ENCODE measurements at regions of chr5 and their contacts with region 1.

Region 1: DNA sequence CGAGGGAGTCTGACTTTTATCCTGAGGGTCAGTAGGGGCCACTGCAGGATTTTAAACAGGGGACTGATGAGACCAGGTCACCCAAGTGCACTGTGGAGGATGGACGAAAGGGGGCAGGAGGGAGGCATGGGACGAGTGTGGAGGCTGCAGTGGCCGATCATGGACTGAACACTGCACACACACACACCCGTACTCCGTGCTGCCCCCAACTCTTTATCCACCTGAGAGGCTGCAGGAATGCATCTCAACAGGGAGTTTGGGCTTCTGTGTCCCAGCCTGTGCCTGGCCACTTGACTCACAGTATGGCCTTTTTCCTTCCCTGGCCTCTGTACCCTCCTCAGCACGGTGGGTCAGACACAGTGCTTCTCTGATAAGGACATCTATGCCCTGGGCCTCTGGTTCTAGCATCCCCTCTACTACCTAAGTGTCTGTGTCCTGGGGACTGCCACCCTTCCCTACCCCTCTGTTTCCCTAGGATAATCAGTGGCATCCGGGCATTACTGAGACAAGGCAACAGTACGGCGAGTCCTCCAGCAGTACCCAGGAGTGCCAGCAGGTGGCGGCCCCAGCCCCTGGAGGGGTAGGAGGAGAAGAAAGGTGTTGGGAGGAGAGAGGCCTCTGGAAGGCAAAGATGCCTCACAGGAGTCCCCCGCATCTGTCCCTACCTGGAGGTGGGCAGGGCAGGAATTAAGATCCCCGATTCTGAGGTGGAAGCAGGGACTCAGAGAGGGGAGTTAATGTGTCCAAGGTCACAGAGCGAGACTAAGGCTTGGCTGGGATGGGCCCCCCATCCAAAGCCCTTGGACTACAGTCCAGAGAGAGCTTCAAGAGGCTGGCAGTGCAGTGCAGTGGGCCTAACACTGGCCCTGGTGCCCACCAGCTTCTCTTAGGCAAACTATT is 5.1 kb upstream of the CDX1 start:
- DNase-seq: peak; percentile 97
- ATAC-seq: peak; percentile 85
- H3K4me3 Mint-ChIP-seq: peak overlapping the region; percentile 43
- H3K27ac Mint-ChIP-seq: no peak overlapping the region
- H3K4me1 Mint-ChIP-seq: peaks cover 26% of the 10 kb centered on the region
- H3K27me3 Mint-ChIP-seq: peaks cover 56% of the 10 kb centered on the region
- CTCF ChIP-seq: peak; percentile 95

Region 2: DNA sequence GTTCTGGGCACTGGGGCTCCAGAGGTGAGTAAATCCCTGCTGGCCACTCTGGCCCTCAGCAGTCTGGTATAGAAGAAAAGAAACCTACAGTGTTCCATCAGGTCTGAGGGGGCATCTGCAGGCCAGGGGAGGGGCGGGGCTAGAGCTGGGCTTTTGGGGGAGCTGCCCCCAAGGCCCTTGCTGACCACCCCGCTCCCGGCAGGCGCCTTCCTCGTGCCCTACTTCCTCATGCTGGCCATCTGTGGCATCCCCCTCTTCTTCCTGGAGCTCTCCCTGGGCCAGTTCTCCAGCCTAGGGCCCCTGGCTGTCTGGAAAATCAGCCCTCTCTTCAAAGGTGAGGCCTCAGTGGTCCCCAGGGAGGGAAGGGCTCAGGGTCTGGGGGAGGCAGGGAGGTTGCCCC is 35.0 kb after region 1 on chr5:
- CTCF ChIA-PET with region 1: no interaction called
- POLR2A ChIA-PET with region 1: no interaction called
- DNase-seq: no peak
- ATAC-seq: no peak
- H3K4me3 Mint-ChIP-seq: no peak overlapping the region
- H3K27ac Mint-ChIP-seq: no peak overlapping the region
- H3K4me1 Mint-ChIP-seq: no peaks in the 10 kb centered on the region
- H3K27me3 Mint-ChIP-seq: peaks cover 17% of the 10 kb centered on the region
- CTCF ChIP-seq: no peak

Region 3: DNA sequence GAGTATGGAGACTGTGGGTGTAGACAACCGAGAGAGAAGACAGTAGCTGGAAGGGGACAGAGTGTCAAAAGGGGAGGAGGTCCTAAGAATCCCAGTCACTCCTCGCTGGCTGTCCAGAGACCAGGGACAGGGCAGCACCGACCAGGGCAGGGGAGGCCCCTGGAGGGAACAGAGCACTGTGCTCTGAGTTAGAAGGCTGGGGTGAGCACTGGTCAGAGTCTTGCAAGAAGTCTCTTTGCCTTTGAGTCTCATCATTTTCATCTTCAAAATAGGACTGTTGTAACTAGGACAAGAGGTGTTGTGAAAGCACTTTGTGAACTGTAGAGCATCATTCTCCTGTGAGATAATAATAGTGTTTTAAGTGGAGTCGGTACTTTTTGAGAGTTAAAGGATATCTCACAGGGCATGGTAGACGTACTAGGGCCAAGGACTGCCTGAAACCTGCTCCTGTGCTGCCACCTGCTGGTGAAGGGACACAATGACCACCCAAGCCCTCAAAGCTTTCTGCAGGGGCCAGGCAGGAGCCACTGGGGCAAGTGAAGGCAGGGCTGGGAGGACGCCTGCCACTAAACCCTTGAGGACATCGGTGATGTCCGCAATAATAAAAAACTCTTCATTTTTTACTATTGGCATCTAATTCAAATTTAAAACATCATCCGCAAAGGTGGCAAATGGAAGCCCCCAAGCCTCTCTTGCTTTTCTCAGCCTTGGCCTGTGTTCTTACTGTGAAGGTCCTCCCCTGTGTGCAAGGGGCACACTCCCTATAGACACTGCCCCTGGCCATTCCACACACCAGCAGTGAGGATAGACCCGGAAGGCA is 56.6 kb after region 1 on chr5:
- CTCF ChIA-PET with region 1: interaction called, 20 read pairs
- POLR2A ChIA-PET with region 1: no interaction called
- DNase-seq: peak; percentile 90
- ATAC-seq: peak; percentile 92
- H3K4me3 Mint-ChIP-seq: no peak overlapping the region
- H3K27ac Mint-ChIP-seq: no peak overlapping the region
- H3K4me1 Mint-ChIP-seq: 0 out of 2 replicates have a peak, but pooled peaks cover 2% of the 10 kb centered on the region
- H3K27me3 Mint-ChIP-seq: peaks cover 9% of the 10 kb centered on the region
- CTCF ChIP-seq: peak; percentile 87

Region 4: DNA sequence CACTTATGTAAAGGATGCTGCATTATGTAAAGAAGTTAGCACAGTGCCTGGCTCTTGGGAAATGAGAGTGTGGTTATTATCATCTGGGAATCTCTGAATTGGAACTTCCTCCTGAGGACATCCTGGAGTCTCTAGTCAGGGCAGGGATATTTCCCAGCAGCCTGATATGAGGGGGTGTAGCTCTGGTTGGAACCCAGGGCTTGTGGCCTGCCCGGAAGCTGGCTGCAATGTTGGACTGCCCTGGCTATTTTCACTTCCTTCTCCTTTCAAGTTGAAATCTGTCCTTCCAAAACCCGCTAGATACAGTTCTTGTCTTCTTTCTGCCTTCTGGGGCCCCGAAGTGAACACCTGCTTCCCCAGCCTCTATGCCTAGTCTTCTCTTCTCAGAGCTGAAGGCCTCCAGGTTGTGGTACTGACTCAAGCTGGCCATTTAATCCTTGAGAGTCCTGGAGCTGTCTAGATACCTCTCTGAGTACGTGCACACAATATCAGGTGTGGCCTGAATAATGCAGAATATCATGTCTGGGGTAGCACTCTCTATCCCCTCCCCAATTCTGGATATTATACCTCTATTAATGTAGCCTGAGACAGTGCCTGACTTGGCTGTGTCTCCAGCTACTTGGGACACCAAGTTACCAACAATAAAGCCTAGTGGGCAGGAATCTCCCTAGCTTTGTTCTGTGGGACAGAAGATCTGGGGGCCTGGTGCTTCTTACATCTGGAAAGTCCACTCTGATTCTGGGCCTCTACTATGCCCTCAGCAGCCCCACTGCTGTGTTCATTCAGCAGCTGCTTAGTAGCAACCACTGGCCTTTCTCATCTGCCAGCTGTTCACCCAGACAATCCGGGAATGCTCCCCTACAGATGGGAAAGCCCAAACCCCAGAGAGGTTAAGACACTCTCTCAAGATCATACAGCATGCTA is 73.3 kb after region 1 on chr5:
- CTCF ChIA-PET with region 1: no interaction called
- POLR2A ChIA-PET with region 1: no interaction called
- DNase-seq: no peak
- ATAC-seq: no peak
- H3K4me3 Mint-ChIP-seq: no peak overlapping the region
- H3K27ac Mint-ChIP-seq: no peak overlapping the region
- H3K4me1 Mint-ChIP-seq: no peaks in the 10 kb centered on the region
- H3K27me3 Mint-ChIP-seq: no peaks in the 10 kb centered on the region
- CTCF ChIP-seq: no peak

Measured in WTC11 (cell line).